H1 (cell line): ENCODE measurements at regions of chr1 and their contacts with region 1.

Region 1: GRCh38 chr1:50605186-50605875 is 182.1 kb upstream of the DMRTA2 start:
- DNase-seq: no peak
- H3K4me3 ChIP-seq: no peak overlapping the region
- H3K27ac ChIP-seq: no peak overlapping the region
- H3K4me1 ChIP-seq: no peaks in the 10 kb centered on the region
- H3K27me3 ChIP-seq: no peaks in the 10 kb centered on the region
- CTCF ChIP-seq: peak in 2 of 3 experiments; percentile 62 to 64; a peak in 3 of 4 replicates
- EP300 ChIP-seq: no peak
- POLR2A ChIP-seq: no peak
- RAD21 ChIP-seq: peak; percentile 77 to 81

Region 2: GRCh38 chr1:50368179-50369012 is 236.9 kb before region 1 on chr1:
- CTCF ChIA-PET with region 1: interaction called, 43 read pairs
- POLR2A ChIA-PET with region 1: no interaction called
- DNase-seq: peak in 1 of 2 experiments; percentile 92
- H3K4me3 ChIP-seq: 0 out of 8 replicates have a peak overlapping the region, but pooled peaks of 1 of the 4 experiments have one; percentile 28
- H3K27ac ChIP-seq: no peak overlapping the region
- H3K4me1 ChIP-seq: no peaks in the 10 kb centered on the region
- H3K27me3 ChIP-seq: peaks cover 3 to 18% (median 12%) of the 10 kb centered on the region in 4 experiments; a peak in 5 of 7 replicates
- CTCF ChIP-seq: peak; percentile 58 to 81 (median 62)
- EP300 ChIP-seq: no peak
- POLR2A ChIP-seq: no peak
- RAD21 ChIP-seq: peak; percentile 94

Region 3: DNA sequence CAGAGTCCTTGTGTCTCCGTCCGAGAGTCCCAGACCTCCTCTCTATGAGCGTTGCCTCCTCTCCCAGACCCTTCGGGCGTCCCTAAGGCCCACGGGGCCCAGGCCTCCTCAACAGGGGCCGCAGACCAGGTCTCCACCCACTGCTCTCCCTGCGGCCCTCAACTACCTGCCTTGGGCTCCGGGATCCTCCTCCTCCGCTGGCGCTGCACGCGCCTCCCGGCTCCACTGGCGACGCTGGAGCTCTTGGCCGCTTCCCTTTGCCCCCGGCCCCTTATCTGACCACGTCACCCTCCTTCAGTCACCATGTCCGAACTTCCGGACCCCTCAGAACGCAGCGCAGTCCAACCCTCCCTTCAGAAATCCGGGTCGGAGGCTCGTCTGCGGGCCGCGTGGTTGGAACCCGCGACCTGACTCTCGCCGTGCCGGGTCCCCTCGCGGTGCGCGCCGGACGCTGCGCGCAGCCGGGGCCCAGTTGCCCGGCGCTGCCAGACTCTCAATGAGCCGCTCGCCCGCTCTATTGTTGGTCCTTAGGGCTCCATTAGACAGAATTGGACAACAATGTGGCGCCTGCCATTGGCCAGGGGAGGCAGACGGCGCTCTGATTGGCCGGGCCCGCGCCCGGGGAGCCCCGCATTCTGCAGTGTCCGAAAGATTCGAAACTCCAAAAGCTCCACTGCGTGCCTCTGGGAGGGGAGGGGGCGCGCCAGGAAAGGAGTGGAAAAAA is 182.2 kb before region 1 on chr1 and contains the start of gene DMRTA2:
- CTCF ChIA-PET with region 1: interaction called, 13 read pairs
- POLR2A ChIA-PET with region 1: no interaction called
- DNase-seq: peak in 1 of 2 experiments; percentile 87
- H3K4me3 ChIP-seq: peak within 1 kb of the TSS; percentile 20 to 56 (median 34)
- H3K27ac ChIP-seq: no peak within 1 kb of the TSS
- H3K4me1 ChIP-seq: peaks cover 6 to 32% (median 18%) of the 10 kb centered on the region in 4 experiments; a peak in 6 of 7 replicates
- H3K27me3 ChIP-seq: peaks cover 99 to 100% (median 99%) of the 10 kb centered on the region in 4 experiments
- CTCF ChIP-seq: no peak
- EP300 ChIP-seq: no peak
- POLR2A ChIP-seq: no peak
- RAD21 ChIP-seq: no peak
- total RNA-seq, gene DMRTA2: not detected in 2 replicates

Region 4: DNA sequence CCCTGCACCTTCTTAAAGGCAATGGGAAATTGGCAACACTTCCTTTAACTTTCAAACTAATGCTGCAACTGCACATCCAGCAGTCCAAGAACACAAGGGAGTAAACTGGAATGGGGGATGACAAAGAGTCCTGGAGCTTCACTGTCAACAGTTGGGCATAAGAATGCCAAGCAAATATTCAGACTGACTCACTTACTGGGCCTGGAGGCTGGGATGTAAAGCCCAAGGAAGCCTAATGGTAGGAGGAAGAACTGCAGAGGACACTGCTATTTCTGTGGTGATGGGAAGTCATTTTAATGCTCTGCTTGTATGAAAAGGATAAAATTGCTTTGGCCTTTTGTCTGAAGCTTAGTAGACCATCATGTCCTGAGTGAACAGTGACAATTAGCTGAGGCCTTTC is 166.4 kb before region 1 on chr1:
- CTCF ChIA-PET with region 1: interaction called, 13 read pairs
- POLR2A ChIA-PET with region 1: no interaction called
- DNase-seq: no peak
- H3K4me3 ChIP-seq: no peak overlapping the region
- H3K27ac ChIP-seq: no peak overlapping the region
- H3K4me1 ChIP-seq: no peaks in the 10 kb centered on the region
- H3K27me3 ChIP-seq: peaks cover 0 to 2% (median under 1%) of the 10 kb centered on the region in 4 experiments; a peak in 1 of 7 replicates
- CTCF ChIP-seq: peak in 2 of 3 experiments; percentile 9 to 48; a peak in 2 of 4 replicates
- EP300 ChIP-seq: no peak
- POLR2A ChIP-seq: no peak
- RAD21 ChIP-seq: peak; percentile 13 to 22; a peak in 2 of 4 replicates

Region 5: GRCh38 chr1:50502147-50502546 is 103.2 kb before region 1 on chr1:
- CTCF ChIA-PET with region 1: no interaction called
- POLR2A ChIA-PET with region 1: no interaction called
- DNase-seq: no peak
- H3K4me3 ChIP-seq: no peak overlapping the region
- H3K27ac ChIP-seq: no peak overlapping the region
- H3K4me1 ChIP-seq: no peaks in the 10 kb centered on the region
- H3K27me3 ChIP-seq: no peaks in the 10 kb centered on the region
- CTCF ChIP-seq: no peak
- EP300 ChIP-seq: no peak
- POLR2A ChIP-seq: no peak
- RAD21 ChIP-seq: no peak

Region 6: DNA sequence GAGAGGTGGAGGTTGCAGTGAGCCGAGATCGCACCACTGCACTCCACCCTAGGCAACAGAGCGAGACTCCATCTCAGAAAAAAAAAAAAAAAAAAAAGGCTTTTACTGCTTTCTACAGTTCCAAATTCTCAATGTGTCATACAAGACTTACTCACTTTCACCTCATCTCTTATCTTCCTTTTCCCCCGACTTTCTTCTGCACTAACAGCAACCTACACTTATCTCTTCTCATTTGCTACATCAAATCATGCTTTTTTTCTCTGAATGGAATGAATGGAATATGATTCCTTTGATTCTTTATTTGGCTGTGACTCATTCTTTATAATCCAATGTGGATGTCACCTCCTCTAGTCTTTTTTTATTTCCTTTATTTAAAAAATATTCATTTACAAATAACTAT is 13.7 kb before region 1 on chr1:
- CTCF ChIA-PET with region 1: interaction called, 16 read pairs
- POLR2A ChIA-PET with region 1: no interaction called
- DNase-seq: no peak
- H3K4me3 ChIP-seq: no peak overlapping the region
- H3K27ac ChIP-seq: no peak overlapping the region
- H3K4me1 ChIP-seq: no peaks in the 10 kb centered on the region; a peak in 1 of 7 replicates
- H3K27me3 ChIP-seq: no peaks in the 10 kb centered on the region
- CTCF ChIP-seq: no peak
- EP300 ChIP-seq: no peak
- POLR2A ChIP-seq: no peak
- RAD21 ChIP-seq: no peak

Region 7: DNA sequence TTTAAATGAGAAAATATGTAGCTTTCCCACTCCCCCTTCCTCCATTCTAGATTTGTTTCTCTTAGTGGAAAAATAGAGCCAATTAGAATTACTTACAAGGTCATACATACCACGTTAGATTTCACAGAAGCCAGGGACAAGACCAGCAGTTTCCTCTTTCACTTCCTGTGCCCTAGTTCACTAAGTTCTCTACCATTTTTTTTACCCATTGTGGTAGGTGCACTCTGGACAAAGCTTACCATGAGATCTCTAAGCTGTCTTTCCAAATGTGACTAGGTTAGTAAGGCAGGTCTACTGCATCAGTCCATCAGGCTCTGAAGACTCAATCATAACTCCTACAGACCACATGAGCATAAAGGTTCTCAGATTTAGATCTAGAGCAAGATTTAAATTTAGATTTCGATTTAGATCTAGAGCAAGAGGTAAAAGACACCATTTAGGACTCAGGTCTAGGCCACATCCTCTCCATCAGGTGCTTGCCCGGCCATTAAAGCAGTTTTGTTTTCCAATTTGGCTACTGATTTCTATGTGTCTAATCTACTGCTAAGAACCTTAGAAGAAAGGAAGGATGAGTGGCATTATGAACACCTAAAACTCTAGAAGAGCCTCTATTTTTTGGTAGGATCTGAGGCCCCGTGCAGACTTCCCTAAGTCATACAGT is 119.4 kb after region 1 on chr1:
- CTCF ChIA-PET with region 1: no interaction called
- POLR2A ChIA-PET with region 1: no interaction called
- DNase-seq: no peak
- H3K4me3 ChIP-seq: no peak overlapping the region
- H3K27ac ChIP-seq: no peak overlapping the region
- H3K4me1 ChIP-seq: no peaks in the 10 kb centered on the region
- H3K27me3 ChIP-seq: no peaks in the 10 kb centered on the region
- CTCF ChIP-seq: no peak
- EP300 ChIP-seq: no peak
- POLR2A ChIP-seq: no peak
- RAD21 ChIP-seq: no peak

Region 8: GRCh38 chr1:50893466-50893865 is 288.1 kb after region 1 on chr1:
- CTCF ChIA-PET with region 1: no interaction called
- POLR2A ChIA-PET with region 1: no interaction called
- DNase-seq: no peak
- H3K4me3 ChIP-seq: no peak overlapping the region
- H3K27ac ChIP-seq: no peak overlapping the region
- H3K4me1 ChIP-seq: no peaks in the 10 kb centered on the region
- H3K27me3 ChIP-seq: no peaks in the 10 kb centered on the region
- CTCF ChIP-seq: no peak
- EP300 ChIP-seq: no peak
- POLR2A ChIP-seq: no peak
- RAD21 ChIP-seq: no peak